ENCODE measurements at regions of chr1 and their contacts with region 1.

Region 1: GRCh38 chr1:185156854-185157598 is at the starts of genes SWT1 and TRMT1L:
- DNase-seq: peak; percentile 97
- ATAC-seq: peak; percentile 85
- H3K4me3 Mint-ChIP-seq: peak within 1 kb of the TSS; percentile 99
- H3K27ac Mint-ChIP-seq: peak within 1 kb of the TSS; percentile 100
- H3K4me1 Mint-ChIP-seq: peaks cover 50% of the 10 kb centered on the region
- H3K27me3 Mint-ChIP-seq: no peaks in the 10 kb centered on the region
- CTCF ChIP-seq: no peak
- total RNA-seq, gene SWT1: 4.9 and 5.5 TPM in 2 replicates
- total RNA-seq, gene TRMT1L: 20.0 and 23.9 TPM in 2 replicates

Region 2: DNA sequence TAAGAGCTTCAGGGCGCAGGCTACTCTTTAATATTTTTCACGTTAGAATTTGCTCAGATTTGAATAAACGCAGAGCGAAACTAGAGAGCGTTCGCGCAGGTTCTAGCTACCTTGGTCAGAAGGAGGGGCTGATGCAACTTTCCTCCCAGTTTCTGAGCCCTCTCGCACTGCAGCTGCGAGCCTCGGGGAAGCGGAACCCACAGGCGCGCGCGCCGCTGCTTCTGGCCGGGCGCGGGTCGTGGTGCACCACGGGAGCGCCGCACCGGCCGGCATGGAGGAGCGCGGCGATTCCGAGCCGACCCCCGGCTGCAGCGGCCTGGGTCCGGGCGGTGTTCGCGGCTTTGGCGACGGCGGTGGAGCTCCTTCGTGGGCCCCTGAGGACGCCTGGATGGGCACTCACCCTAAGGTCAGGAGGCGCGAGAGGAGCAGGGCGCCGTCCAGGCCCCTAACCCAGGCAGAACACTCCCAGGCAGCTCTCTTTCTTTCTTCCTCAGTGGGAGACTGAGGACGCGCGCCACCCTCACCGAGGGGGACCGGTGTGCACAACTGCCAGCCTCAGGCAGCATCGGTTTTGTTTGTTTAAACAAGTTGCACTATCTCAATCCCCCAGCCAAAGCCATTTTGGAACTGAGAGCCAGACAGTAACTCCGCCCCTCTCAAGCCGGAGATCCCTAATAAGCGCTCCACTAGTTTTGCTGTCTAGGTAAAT is 1105.4 kb before region 1 on chr1 and contains the start of gene TSEN15:
- CTCF ChIA-PET with region 1: no interaction called
- POLR2A ChIA-PET with region 1: no interaction called
- intact Hi-C with region 1: loop called (anchors 5 kb)
- DNase-seq: peak; percentile 76
- ATAC-seq: peak; percentile 95
- H3K4me3 Mint-ChIP-seq: peak within 1 kb of the TSS; percentile 98
- H3K27ac Mint-ChIP-seq: peak within 1 kb of the TSS; percentile 98
- H3K4me1 Mint-ChIP-seq: peaks cover 36% of the 10 kb centered on the region
- H3K27me3 Mint-ChIP-seq: peaks cover 26% of the 10 kb centered on the region
- CTCF ChIP-seq: no peak
- total RNA-seq, gene TSEN15: 60.8 and 61.2 TPM in 2 replicates

Region 3: DNA sequence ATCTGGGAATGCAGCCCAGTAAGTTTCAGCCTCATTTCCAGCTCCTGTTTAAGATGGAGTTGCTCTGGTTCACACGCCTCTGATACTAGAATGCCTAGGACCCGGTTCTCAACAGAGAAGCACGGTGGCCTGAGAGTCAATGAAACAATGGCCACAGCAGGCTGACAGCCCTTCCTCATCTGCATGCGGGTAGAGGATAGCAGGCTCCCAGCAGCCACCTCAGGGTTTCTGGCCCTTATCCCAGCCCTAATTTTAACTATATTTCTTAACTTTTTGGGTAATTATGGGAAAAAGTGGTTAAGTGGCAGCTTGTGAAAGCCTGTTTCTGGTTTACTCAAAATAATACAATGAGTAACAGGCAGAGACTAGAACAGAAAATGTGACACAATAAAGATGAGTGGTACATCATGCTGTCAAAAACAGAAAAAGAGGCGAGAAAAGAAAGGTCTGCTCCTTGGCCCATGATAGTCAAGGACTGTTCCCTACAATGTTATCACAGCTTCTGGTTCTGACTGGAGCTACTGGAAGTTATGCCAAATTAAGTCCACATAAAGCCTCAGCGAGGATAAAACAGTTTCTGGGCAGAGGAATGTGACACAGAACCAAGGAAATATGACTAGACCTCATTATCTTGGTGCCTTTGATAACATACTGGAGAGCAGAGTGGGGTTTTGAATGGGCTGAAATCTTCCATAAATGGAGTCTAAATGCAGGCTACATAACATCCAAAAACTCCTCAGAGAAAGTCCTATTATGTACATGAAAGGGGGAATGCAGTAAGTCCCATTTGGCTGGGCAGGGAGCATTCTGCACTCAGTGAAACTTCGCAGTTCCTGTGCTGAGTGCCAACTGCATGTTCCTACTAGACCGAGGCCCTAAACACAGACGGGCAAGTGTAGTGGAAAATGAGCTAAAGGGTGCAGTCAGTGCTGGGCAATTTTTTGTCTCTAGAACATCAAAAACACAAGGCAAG is 274.8 kb before region 1 on chr1:
- CTCF ChIA-PET with region 1: no interaction called
- POLR2A ChIA-PET with region 1: no interaction called
- intact Hi-C with region 1: no loop called
- DNase-seq: no peak
- ATAC-seq: no peak
- H3K4me3 Mint-ChIP-seq: no peak overlapping the region
- H3K27ac Mint-ChIP-seq: no peak overlapping the region
- H3K4me1 Mint-ChIP-seq: no peaks in the 10 kb centered on the region
- H3K27me3 Mint-ChIP-seq: no peaks in the 10 kb centered on the region
- CTCF ChIP-seq: no peak

Region 4: GRCh38 chr1:184973272-184974055 is 183.6 kb before region 1 on chr1:
- CTCF ChIA-PET with region 1: interaction called, 3 read pairs
- POLR2A ChIA-PET with region 1: interaction called, 4 read pairs
- intact Hi-C with region 1: loop called (anchors 2 kb)
- DNase-seq: peak; percentile 61
- ATAC-seq: peak; percentile 51
- H3K4me3 Mint-ChIP-seq: peak overlapping the region; percentile 93
- H3K27ac Mint-ChIP-seq: peak overlapping the region; percentile 91
- H3K4me1 Mint-ChIP-seq: peaks cover 59% of the 10 kb centered on the region
- H3K27me3 Mint-ChIP-seq: peaks cover 2% of the 10 kb centered on the region
- CTCF ChIP-seq: no peak

Region 5: DNA sequence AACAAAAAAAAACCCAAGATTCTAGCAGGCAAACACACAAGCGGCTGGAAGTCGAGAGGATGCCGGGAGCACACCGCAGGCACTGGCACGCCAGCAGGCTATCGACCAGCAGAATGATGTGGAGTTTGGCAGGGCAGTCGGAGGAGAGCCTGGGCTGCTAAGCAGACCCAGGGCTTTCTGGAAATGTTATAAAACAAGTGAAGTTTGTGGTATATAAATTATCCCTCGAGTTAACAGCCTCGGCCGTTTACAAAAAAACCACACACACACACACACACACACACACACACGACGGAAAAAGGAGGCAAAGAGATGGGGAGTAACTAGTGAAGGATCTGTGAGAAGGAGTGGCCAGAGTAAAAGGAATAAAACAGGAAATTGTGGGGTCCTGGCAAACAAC is 247.3 kb after region 1 on chr1:
- CTCF ChIA-PET with region 1: no interaction called
- POLR2A ChIA-PET with region 1: no interaction called
- intact Hi-C with region 1: loop called (anchors 10 kb)
- DNase-seq: no peak
- ATAC-seq: no peak
- H3K4me3 Mint-ChIP-seq: no peak overlapping the region
- H3K27ac Mint-ChIP-seq: no peak overlapping the region
- H3K4me1 Mint-ChIP-seq: peaks cover 45% of the 10 kb centered on the region
- H3K27me3 Mint-ChIP-seq: no peaks in the 10 kb centered on the region
- CTCF ChIP-seq: no peak

Region 6: GRCh38 chr1:185681034-185681633 is 524.1 kb after region 1 on chr1:
- CTCF ChIA-PET with region 1: interaction called, 6 read pairs
- POLR2A ChIA-PET with region 1: interaction called, 8 read pairs
- intact Hi-C with region 1: loop called (anchors 1 kb)
- DNase-seq: no peak
- ATAC-seq: peak; percentile 67
- H3K4me3 Mint-ChIP-seq: no peak overlapping the region
- H3K27ac Mint-ChIP-seq: no peak overlapping the region
- H3K4me1 Mint-ChIP-seq: peaks cover 19% of the 10 kb centered on the region
- H3K27me3 Mint-ChIP-seq: no peaks in the 10 kb centered on the region
- CTCF ChIP-seq: peak; percentile 50

Region 7: DNA sequence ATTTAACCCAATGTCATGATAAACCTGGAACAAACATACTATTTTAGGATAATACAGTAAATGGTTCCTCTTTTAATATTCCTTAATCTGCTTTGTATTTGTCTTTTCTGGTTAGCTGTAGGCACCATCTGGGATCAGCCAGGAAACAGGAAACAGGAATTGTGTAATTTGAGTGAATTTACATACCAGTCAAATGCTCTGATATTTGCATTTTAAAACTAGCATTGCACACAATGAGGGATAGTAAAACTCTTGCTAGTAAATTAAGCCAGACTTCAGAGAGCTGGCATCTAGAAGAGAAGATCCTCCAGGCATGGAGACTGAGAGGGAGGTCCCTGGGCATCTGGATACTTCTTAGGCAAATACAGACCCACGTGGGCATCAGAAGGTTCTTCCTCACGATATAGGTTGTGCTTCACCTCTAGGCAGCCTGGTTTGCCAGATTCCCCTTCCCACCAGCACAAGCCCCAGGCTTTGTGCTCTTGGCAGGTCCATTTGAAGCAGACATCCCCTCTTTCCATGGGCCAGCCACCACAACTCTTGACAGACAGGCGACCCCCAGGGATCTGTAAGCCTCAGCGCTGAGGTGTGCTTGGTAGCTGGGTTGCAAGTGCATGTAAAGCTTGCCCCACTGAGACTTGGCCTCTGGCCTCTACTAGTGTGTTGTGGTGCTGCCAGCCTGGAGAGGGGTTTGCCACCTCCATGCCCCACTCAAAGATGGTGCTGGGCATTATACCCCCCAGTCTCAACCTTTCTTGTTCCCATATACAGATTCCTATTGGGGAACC is 680.9 kb after region 1 on chr1:
- CTCF ChIA-PET with region 1: no interaction called
- POLR2A ChIA-PET with region 1: no interaction called
- intact Hi-C with region 1: no loop called
- DNase-seq: no peak
- ATAC-seq: no peak
- H3K4me3 Mint-ChIP-seq: no peak overlapping the region
- H3K27ac Mint-ChIP-seq: no peak overlapping the region
- H3K4me1 Mint-ChIP-seq: no peaks in the 10 kb centered on the region
- H3K27me3 Mint-ChIP-seq: peaks cover 2% of the 10 kb centered on the region
- CTCF ChIP-seq: no peak

Measured in activated B cell treated with CpG ODN at 0.5 μM for 24 hours (primary cell).